Dendritic cell treated with granulocyte-macrophage colony-stimulating factor and Interleukin-4, amounts not matched to agents 40 ng/mL and 50 ng/mL, for 4 days (primary cell): ENCODE measurements at regions of chr11 and their contacts with region 1.

Region 1: DNA sequence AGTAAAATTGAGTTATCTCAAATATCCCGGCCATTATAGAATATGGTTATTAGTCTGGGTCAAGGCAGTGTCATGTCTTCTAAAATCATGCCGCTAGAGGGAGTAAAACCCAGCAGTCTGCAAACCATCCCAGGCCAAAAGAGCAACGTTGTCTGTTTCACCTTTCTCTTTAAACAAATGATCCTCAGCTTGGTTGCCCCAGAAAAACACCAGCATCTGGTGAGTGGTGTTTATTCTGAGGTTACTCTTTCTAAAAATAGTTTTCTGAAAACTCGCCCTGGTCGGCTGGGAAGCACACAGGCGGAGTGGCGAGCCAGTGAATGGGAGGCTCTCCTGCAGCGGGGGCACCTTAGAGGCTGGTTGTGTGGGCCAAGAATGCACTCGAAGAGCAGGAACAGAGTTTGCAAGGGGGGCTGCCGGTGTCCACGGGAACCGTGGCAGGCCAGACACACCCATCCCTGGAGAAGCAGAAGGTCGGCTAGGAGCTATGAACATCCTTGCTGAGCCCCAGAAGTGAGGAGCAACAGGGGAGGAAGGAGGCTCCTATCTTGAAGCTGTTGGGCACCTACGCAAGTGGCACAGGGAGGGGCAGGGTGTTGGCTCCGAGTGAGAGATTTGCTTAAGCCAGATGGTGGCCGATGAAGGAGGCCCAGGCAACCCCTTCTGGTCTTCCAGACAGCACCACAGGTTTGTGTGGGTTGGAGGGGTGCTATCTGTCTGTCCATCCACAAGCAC is 297.1 kb downstream of the ETS1 start:
- H3K4me3 Mint-ChIP-seq: no peak overlapping the region
- H3K27ac Mint-ChIP-seq: no peak overlapping the region
- H3K4me1 Mint-ChIP-seq: peaks cover 22% of the 10 kb centered on the region
- H3K27me3 Mint-ChIP-seq: peaks cover 21% of the 10 kb centered on the region

Region 2: DNA sequence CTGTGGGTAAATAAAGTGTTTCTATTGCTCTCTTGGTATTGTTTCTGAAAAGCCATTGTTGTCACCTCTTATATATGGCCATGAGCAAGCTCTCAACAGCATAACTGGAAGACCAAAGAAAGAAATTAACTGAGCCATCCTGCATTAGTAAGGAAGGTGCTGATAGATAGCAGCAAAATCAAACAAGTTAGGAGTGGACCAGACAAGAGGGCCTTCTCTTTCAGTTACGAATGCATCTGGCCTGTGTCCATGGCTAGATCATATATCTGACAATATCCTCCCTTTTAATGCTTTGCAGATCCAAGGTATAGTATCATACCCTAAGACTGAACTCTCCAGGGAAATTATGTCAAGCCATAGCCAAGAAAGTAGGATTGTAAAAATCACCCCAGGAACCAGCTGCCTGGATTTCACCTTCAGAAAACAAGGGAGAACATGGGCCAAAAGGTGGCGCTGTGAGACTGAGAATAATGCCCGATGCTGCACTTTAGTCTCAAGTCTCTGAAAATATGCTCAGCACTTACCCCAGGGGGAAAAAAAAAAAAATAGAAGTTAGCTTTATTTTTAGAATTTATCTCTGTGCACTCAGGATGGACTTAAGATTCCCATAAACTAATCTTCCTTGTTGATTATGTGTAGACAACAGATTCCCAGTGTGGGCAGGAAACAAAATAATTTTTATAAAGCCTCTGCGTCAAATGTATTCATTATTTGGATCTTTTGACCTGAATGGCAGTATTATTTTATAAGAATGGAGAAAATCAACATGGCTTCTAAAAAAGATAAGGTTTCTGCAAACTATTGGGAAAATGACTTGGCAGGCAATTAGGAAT is 118.0 kb before region 1 on chr11:
- intact Hi-C with region 1: loop called (anchors 1 kb)
- H3K4me3 Mint-ChIP-seq: no peak overlapping the region
- H3K27ac Mint-ChIP-seq: no peak overlapping the region
- H3K4me1 Mint-ChIP-seq: no peaks in the 10 kb centered on the region
- H3K27me3 Mint-ChIP-seq: no peaks in the 10 kb centered on the region

Region 3: DNA sequence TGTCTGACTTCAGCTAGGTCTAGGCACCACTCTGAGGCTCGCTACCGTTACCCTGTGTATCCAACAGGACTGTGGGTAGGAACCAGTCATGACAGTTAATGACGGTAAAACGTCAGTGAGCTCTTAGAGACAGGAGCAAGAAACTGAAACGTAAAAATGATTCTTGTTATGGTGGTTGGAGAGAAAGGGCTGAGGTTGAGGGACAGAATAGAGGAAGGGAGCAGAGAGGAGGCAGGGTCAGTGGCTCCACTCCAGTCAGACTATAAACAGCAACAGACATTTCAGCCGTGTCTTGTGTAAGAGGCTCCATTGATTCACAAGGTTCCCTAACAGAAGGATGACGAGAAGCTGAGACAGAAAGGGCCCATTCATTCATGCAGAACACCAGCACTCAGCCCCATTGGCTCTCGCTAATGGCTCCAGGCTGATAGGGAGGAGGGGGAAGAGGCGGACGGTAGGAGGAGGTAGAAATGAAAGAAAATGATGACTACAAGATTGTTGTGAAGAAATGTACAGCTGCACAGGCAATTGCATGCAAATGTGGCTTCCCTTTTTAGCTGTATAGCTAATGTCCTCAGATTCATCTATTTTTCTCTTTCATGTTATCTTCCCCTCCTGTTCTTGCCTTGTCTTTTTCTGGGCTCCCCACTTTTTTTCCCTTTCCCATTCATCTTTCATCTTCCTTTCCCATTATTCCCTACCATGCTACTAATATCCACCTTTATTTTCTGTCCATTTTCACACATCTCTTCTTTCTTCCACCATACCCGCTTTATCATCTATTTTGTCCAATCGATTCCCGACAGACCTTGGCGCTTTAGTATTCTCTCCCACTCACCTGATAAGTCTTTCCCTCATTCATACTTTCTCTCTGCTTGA is 262.7 kb after region 1 on chr11:
- intact Hi-C with region 1: loop called (anchors 10 kb)
- H3K4me3 Mint-ChIP-seq: peak overlapping the region; percentile 49
- H3K27ac Mint-ChIP-seq: peak overlapping the region; percentile 78
- H3K4me1 Mint-ChIP-seq: peaks cover 54% of the 10 kb centered on the region
- H3K27me3 Mint-ChIP-seq: peaks cover 13% of the 10 kb centered on the region

Region 4: DNA sequence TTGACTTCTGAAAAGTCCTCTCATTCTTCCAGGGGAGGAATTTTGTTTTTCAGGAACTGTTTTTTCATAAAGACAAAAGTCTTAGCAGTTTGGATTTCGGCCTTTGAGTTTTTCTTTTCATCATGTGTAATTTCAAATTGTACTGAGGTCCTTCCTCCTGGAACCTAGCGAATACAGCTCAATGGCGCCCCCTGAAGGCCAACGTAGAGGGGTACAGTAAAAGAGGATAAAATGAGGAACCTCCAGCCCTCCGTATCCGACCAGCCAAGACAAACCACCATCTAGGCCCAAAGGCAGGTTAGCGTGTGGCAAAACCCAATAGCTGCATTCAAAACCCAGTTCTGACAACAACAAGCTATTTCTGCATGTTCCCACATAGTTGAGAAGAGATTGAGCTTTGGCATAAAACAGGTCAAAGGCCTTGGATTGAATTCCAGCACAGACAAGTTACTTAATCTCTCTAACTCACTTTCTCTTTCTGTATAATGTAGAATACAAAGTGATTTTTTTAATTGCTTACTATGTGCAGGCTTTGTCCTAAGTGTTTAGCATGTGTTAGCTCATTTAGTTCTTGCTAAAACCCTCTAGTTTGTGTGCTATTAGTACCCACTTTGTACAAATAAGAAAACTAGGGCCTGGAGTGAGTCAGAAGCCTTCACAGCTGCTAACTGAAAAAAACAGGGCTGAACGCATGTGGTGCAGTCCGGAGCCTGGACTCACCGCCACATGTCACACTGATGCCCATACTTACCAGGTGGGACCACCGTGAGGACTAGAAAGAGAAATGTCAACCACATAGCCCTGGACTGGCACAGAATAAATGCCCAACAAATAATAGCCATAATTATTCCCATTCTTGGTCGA is 340.3 kb after region 1 on chr11:
- intact Hi-C with region 1: loop called (anchors 1 kb)
- H3K4me3 Mint-ChIP-seq: no peak overlapping the region
- H3K27ac Mint-ChIP-seq: no peak overlapping the region
- H3K4me1 Mint-ChIP-seq: peaks cover 1% of the 10 kb centered on the region
- H3K27me3 Mint-ChIP-seq: peaks cover 3% of the 10 kb centered on the region

Region 5: DNA sequence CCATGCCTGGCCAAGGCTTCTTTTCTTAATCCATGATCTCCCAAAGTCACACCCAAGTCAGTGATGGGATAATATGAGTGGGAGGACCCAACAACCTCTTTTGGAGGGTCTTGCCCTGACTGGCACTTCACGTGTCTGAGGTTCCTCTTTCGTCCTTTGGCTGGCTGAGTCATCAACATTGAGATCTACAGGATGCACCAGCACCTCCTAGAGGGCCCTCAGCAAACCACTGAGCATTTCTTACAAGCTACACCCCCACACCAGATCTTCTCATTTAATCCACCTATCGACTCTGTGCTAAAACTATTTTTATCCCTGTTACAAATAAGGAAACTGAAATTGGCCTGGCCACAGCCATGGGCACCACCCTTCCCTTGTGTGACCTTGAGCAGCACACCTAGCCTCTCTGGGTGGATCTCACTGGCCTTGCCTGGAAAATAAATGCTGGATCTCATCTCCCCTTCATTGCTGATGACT is 467.0 kb after region 1 on chr11:
- intact Hi-C with region 1: loop called (anchors 5 kb)
- H3K4me3 Mint-ChIP-seq: no peak overlapping the region
- H3K27ac Mint-ChIP-seq: peak overlapping the region; percentile 85
- H3K4me1 Mint-ChIP-seq: peaks cover 48% of the 10 kb centered on the region
- H3K27me3 Mint-ChIP-seq: no peaks in the 10 kb centered on the region

Region 6: DNA sequence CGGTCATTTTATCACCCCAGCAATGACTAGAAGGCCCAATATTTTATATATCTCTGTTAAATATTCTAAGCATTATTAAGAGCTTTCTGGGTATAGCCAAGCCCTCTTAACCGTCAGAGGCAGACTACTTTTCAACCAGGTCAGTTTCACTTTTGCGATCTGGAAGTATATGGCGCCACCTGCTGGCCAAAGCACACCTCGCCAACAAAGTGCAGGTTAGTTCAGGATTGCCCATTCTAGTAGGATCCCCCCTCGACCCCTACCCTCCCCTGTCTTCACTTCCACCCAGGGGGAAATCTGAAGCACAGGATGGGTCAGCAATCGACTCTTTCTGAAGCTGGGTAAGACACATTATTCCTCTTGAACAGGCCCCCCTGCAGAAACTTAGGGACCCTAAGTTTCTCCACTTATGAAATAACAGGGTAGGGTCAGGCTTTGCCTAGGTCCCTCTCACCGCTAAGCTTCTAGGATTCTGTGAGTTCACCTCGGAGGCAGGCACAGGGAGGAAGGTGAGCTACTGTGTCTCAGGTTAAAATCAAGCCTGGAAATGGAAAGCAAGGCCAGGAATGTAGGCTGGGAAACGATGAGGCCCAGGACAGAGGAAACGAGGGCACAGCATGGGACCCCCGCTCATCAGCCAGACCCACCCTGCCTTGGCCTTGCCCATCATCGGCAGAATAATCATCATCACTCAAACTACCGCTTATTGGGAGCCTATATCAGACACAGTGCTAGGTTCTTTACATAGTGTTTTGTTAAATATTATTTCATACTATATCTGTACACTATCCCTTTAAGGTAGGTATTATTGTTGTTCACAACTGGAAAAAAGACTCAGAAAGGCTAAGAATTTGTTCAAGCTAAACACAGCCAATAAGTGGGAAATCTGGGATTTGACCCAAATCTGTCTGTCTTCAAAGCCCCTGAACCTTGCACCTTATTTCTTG is 541.2 kb after region 1 on chr11:
- intact Hi-C with region 1: loop called (anchors 10 kb)
- H3K4me3 Mint-ChIP-seq: no peak overlapping the region
- H3K27ac Mint-ChIP-seq: no peak overlapping the region
- H3K4me1 Mint-ChIP-seq: peaks cover 40% of the 10 kb centered on the region
- H3K27me3 Mint-ChIP-seq: no peaks in the 10 kb centered on the region